Heart right ventricle (tissue), 16 donors: ENCODE measurements at regions of chr3 and their contacts with region 1.

Region 1: DNA sequence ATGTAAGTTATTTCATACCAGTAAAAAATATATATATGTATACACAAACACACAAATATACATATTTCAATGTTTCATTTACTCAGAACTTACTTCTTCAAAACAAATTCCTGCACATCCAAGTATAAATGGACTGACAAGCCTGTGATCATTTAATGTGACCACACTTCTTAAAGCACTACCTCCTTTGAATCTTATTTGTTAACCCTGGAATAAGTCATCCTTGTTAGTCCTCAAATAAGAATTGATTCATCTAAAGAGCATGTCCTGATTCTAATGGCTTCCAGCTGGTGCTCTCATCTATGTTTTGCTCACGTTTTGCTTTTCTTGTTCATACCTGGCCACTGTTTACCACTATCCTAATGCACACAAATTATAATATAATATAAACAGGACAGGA is 103.9 kb upstream of the UBP1 start:
- DNase-seq: no peak
- ATAC-seq: no peak
- H3K4me3 ChIP-seq: no peak overlapping the region
- H3K27ac ChIP-seq: no peak overlapping the region
- H3K4me1 ChIP-seq: peaks cover 0 to 3% (median 0%) of the 10 kb centered on the region in 9 donors
- H3K27me3 ChIP-seq: no peaks in the 10 kb centered on the region
- CTCF ChIP-seq: no peak

Region 2: DNA sequence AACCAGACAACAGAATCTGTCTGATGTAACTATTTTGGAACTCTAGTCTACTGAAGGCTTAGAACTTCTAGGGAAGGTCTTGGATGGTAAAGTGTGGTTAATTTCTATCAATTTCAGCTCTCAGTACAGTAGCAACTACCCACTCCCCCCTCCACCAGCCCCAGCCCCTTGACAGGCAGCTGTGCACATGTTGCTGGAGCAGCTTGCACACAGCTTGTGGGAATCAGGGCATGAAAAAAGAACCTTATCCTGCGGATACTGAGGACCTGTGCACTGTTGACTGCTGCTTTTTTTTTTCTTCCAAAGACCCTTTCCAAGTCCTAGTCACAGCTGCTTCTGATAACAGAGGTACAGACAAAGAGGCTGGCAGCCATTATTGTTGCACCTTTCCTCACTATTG is 22.4 kb before region 1 on chr3:
- intact Hi-C with region 1: loop called in 1 of 10 experiments (anchors 1 kb)
- DNase-seq: no peak
- ATAC-seq: no peak
- H3K4me3 ChIP-seq: no peak overlapping the region
- H3K27ac ChIP-seq: no peak overlapping the region
- H3K4me1 ChIP-seq: no peaks in the 10 kb centered on the region
- H3K27me3 ChIP-seq: no peaks in the 10 kb centered on the region
- CTCF ChIP-seq: no peak

Region 3: GRCh38 chr3:33597257-33597689 is 53.1 kb after region 1 on chr3:
- intact Hi-C with region 1: loop called in 1 of 10 experiments (anchors 10 kb)
- DNase-seq: no peak
- ATAC-seq: peak; percentile 12 to 73 (median 64)
- H3K4me3 ChIP-seq: no peak overlapping the region
- H3K27ac ChIP-seq: peak overlapping the region in 5 of 10 donors; percentile 1 to 50 (median 34)
- H3K4me1 ChIP-seq: peaks cover 0 to 17% (median 5%) of the 10 kb centered on the region in 9 donors
- H3K27me3 ChIP-seq: no peaks in the 10 kb centered on the region
- CTCF ChIP-seq: no peak